Mammary epithelial cell (primary cell): ENCODE measurements at regions of chr6 and their contacts with region 1.

Region 1: DNA sequence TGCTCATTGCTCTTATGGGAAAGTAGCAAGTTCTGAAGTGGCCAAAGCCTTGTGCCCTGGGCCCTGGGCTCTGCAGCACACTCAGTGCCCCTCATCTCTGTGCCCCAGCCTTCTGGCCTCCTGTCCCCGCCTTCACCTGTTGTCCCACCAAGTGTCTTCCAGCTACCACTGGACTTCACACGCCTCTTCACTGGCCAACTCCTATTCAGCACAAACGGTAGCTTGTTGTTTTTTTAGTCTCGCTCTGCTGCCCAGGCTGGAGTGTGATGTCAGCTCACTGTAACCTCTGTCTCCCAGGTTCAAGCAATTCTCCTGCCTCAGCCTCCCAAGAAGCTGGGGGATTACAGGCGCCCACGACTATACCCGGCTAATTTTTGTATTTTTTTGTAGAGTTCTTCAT is 4.8 kb downstream of the CCHCR1 start:
- DNase-seq: no peak
- H3K4me3 ChIP-seq: no peak overlapping the region
- H3K27ac ChIP-seq: no peak overlapping the region
- H3K4me1 ChIP-seq: no peaks in the 10 kb centered on the region
- H3K27me3 ChIP-seq: no peaks in the 10 kb centered on the region
- CTCF ChIP-seq: no peak

Region 2: GRCh38 chr6:31094389-31094881 is 58.3 kb before region 1 on chr6:
- CTCF ChIA-PET with region 1: no interaction called
- dilution Hi-C with region 1: loop called (anchors 5 kb)
- in situ Hi-C with region 1: no loop called
- intact Hi-C with region 1: no loop called
- DNase-seq: peak; percentile 17
- H3K4me3 ChIP-seq: no peak overlapping the region
- H3K27ac ChIP-seq: no peak overlapping the region
- H3K4me1 ChIP-seq: peaks cover 13% of the 10 kb centered on the region
- H3K27me3 ChIP-seq: no peaks in the 10 kb centered on the region
- CTCF ChIP-seq: no peak

Region 3: DNA sequence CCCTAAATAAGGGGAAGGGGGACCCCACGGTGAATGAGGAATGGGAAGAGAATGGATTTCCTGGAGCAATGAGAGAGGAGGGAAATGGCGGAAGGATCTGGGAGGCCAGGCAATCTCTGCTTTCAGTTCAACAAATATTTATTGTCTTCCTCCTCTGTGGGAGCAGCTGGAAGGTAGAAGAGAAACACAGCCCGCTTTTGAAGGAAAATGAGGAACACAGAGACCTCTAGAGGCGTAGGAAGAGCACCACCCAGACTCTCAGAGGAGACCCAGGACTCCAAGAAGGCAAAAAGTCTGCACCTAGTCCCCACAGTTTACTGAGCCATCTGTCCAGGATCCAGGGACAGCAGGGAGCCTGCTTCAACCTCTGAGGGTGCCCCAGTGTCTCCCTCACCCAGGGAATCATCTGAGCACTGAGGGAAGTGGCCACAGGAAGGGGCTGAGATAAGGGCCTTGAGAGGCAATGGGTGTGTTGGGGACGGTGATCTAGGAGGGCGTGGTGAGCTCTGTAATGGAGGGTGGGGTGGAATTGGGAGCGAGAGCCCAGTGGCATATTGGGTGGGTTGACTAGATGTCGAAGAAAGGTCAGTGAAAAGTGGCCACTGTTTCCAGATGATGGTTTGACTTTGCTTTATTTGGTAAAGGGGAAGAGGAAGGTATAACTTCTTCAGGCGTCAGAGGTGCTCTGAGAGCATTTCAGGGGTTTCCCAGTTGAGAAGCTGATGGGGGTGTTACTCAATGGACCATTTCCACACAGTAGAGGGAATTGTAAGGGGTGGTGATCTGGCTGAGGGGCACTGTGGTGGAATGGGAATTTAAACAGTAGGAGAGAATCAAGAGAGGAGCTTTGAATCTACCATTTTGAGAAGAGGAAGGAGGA is 37.6 kb before region 1 on chr6:
- CTCF ChIA-PET with region 1: no interaction called
- dilution Hi-C with region 1: loop called (anchors 5 kb)
- in situ Hi-C with region 1: no loop called
- intact Hi-C with region 1: no loop called
- DNase-seq: peak; percentile 24
- H3K4me3 ChIP-seq: peak overlapping the region; percentile 31 to 52 (median 39)
- H3K27ac ChIP-seq: peak overlapping the region; percentile 91
- H3K4me1 ChIP-seq: peaks cover 39% of the 10 kb centered on the region
- H3K27me3 ChIP-seq: no peaks in the 10 kb centered on the region
- CTCF ChIP-seq: peak in 1 of 2 donors; percentile 52

Region 4: GRCh38 chr6:31252625-31253024 is 99.8 kb after region 1 on chr6:
- CTCF ChIA-PET with region 1: no interaction called
- dilution Hi-C with region 1: loop called (anchors 5 kb)
- in situ Hi-C with region 1: no loop called
- intact Hi-C with region 1: no loop called
- DNase-seq: no peak
- H3K4me3 ChIP-seq: no peak overlapping the region
- H3K27ac ChIP-seq: no peak overlapping the region
- H3K4me1 ChIP-seq: no peaks in the 10 kb centered on the region
- H3K27me3 ChIP-seq: no peaks in the 10 kb centered on the region
- CTCF ChIP-seq: no peak

Region 5: GRCh38 chr6:31383149-31383548 is 230.4 kb after region 1 on chr6:
- CTCF ChIA-PET with region 1: no interaction called
- dilution Hi-C with region 1: loop called (anchors 5 kb)
- in situ Hi-C with region 1: no loop called
- intact Hi-C with region 1: no loop called
- DNase-seq: peak; percentile 64
- H3K4me3 ChIP-seq: no peak overlapping the region
- H3K27ac ChIP-seq: no peak overlapping the region
- H3K4me1 ChIP-seq: no peaks in the 10 kb centered on the region
- H3K27me3 ChIP-seq: peaks cover 2% of the 10 kb centered on the region
- CTCF ChIP-seq: no peak